ENCODE measurements at regions of chr9 and their contacts with region 1.

Region 1: GRCh38 chr9:112379177-112380101 is 469 bp upstream of the HSDL2 start:
- DNase-seq: peak; percentile 99
- ATAC-seq: peak; percentile 93
- H3K4me3 Mint-ChIP-seq: peak overlapping the region; percentile 98
- H3K27ac Mint-ChIP-seq: peak overlapping the region; percentile 100
- H3K4me1 Mint-ChIP-seq: peaks cover 42% of the 10 kb centered on the region
- H3K27me3 Mint-ChIP-seq: no peaks in the 10 kb centered on the region

Region 2: DNA sequence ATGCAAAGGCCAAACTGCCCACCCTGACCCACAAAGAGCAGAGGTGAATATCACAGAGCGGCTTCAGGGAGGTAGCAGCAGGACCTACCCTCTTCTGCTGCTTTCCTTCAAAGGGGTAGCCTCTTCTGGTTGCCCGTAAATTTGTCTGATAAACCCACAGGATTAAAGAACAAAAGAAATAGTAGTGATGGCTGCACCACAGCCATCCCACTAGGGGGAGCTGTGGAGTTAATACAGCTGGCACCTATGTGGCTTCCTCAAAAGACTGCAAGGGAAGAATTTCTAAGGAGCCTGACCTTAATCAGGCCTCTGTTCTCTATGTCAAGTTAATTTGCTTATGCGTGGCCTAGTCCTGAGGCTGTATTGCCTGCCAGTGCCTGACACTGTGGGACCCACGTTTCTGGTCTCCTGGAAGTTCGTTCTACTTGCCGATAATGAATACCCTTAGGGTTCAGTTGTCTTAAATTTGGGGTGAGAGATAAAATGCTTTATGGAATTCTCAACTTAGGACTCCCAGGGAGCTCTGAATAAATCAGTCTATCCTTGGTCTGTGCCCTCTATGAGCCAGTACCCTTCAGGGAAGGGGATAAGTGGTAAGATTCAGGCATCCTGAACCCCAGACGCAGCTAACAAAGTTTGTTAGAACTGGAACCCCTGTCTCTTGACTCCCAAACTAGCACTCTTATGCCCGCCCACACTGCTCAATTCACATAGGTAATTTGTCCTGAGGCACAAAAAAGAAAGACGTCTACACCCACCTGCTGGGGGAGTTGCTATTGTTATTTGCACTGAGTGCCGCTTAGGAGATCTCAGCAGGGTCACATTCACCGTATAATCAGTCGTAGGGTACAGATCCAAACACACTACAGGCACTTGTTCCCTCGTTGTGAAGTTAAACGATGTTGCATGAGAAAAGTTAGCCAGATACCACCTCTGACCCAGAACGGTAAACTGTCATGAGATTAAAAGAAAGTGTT is 281.4 kb before region 1 on chr9:
- CTCF ChIA-PET with region 1: interaction called, 16 read pairs
- POLR2A ChIA-PET with region 1: interaction called, 6 read pairs
- intact Hi-C with region 1: no loop called
- DNase-seq: peak; percentile 82
- ATAC-seq: peak; percentile 90
- H3K4me3 Mint-ChIP-seq: no peak overlapping the region
- H3K27ac Mint-ChIP-seq: no peak overlapping the region
- H3K4me1 Mint-ChIP-seq: peaks cover 13% of the 10 kb centered on the region
- H3K27me3 Mint-ChIP-seq: no peaks in the 10 kb centered on the region

Region 3: GRCh38 chr9:112355427-112355897 is 24.0 kb before region 1 on chr9:
- CTCF ChIA-PET with region 1: interaction called, 6 read pairs
- POLR2A ChIA-PET with region 1: no interaction called
- intact Hi-C with region 1: loop called (anchors 1 to 2 kb)
- DNase-seq: peak; percentile 21
- ATAC-seq: peak; percentile 71
- H3K4me3 Mint-ChIP-seq: no peak overlapping the region
- H3K27ac Mint-ChIP-seq: peak overlapping the region; percentile 87
- H3K4me1 Mint-ChIP-seq: peaks cover 31% of the 10 kb centered on the region
- H3K27me3 Mint-ChIP-seq: peaks cover 2% of the 10 kb centered on the region

Region 4: DNA sequence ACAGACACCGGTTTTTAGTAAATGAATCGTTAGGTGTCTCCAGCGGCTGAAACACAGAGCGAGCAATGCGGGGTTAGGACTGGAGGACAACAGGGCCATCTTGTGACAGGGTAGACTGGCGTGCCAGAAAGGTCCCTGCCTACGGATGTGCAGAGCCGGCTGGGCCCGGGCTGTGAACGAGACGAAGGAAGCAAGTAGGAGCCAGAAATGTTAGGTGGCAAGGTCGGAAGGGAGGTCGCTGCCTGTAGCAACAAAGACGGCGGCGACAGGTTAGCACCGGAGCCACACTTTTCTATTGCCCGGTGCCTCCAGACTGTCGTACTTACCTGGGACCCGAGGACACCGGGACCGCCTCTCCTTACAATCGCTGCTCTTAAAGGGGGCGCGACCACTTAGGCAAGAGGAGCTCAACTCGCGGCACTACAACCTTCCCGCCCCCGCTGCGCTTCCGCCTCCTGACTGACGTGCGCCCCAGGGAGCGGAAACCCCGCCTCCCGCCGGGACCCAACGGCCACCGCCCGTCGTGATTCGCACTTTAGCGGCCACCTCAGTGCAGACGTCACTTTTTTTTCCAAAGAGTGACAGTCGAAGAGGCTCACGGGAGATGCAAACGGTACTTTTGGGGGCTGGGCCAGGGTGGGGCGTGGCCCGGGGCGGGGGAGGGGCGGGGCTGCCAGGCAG is 338.4 kb after region 1 on chr9 and contains the start of gene INIP:
- CTCF ChIA-PET with region 1: interaction called, 8 read pairs
- POLR2A ChIA-PET with region 1: interaction called, 5 read pairs
- intact Hi-C with region 1: loop called (anchors 1 to 10 kb)
- DNase-seq: peak; percentile 99
- ATAC-seq: peak; percentile 93
- H3K4me3 Mint-ChIP-seq: peak within 1 kb of the TSS; percentile 89
- H3K27ac Mint-ChIP-seq: peak within 1 kb of the TSS; percentile 97
- H3K4me1 Mint-ChIP-seq: peaks cover 35% of the 10 kb centered on the region
- H3K27me3 Mint-ChIP-seq: no peaks in the 10 kb centered on the region
- total RNA-seq, gene INIP: 37.3 to 37.7 TPM

Measured in activated CD4-positive, alpha-beta T cell treated with anti-CD3 and anti-CD28 coated beads for 36 hours (primary cell).